ENCODE measurements at regions of chr18 and their contacts with region 1.

Region 1: DNA sequence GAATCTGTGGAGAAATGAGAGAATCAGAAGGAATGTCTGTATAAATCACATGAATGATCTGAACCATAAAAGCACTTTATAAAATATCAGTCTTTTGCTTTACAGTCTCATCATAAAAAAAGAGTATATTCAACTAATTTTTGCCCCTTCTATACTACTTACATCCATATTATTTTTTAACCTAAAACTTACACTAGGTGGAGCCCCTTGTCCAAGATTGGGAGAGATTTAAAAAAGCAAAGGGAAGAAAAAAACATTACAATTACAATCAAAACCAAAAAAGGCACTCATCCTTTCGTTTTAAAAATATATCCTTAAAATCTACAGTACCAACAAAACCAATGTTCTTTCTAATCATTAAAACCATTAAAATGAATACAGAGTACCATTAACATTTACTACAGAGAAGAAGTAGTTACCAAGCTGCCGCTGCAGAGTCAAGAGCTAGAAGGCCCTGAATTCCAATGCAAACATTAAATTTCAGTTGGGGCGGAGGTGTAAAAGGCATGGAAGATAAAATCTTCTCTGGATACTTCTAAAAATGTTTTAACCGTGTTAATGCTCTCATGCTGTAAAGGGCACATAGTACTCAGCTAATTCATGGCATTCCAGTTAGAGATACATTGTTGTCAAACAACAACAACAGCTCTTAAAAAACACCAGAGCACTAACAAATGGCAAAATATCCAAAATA is 56.7 kb upstream of the EPB41L3 start:
- DNase-seq: peak; percentile 57
- H3K4me3 ChIP-seq: no peak overlapping the region
- H3K27ac ChIP-seq: no peak overlapping the region
- H3K4me1 ChIP-seq: no peaks in the 10 kb centered on the region
- H3K27me3 ChIP-seq: peaks cover 0 to 11% of the 10 kb centered on the region in 2 experiments
- CTCF ChIP-seq: peak; percentile 8 to 18
- POLR2A ChIP-seq: no peak

Region 2: DNA sequence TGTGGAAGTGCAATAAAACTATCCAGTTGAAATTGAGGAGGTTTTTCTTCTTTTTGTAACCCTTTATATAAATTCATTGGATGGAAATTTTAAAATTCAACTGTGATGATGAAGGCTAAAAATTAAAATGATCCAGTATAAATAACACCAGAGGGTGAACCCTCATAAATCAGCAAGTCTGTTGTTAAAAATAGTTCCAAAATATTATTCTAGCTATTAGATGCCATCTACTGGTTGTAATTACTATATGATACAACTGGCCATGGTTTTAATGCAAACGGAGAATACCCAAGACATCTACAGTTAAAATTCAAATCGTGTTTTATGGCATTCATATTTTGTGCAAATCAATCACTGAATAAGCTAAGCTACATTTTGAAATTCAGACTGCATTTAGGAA is 241.0 kb after region 1 on chr18:
- CTCF ChIA-PET with region 1: interaction called, 18 read pairs
- POLR2A ChIA-PET with region 1: no interaction called
- dilution Hi-C with region 1: no loop called
- intact Hi-C with region 1: loop called (anchors 5 kb)
- DNase-seq: peak; percentile 2
- H3K4me3 ChIP-seq: no peak overlapping the region
- H3K27ac ChIP-seq: no peak overlapping the region
- H3K4me1 ChIP-seq: no peaks in the 10 kb centered on the region
- H3K27me3 ChIP-seq: no peaks in the 10 kb centered on the region
- CTCF ChIP-seq: no peak
- POLR2A ChIP-seq: no peak

Region 3: DNA sequence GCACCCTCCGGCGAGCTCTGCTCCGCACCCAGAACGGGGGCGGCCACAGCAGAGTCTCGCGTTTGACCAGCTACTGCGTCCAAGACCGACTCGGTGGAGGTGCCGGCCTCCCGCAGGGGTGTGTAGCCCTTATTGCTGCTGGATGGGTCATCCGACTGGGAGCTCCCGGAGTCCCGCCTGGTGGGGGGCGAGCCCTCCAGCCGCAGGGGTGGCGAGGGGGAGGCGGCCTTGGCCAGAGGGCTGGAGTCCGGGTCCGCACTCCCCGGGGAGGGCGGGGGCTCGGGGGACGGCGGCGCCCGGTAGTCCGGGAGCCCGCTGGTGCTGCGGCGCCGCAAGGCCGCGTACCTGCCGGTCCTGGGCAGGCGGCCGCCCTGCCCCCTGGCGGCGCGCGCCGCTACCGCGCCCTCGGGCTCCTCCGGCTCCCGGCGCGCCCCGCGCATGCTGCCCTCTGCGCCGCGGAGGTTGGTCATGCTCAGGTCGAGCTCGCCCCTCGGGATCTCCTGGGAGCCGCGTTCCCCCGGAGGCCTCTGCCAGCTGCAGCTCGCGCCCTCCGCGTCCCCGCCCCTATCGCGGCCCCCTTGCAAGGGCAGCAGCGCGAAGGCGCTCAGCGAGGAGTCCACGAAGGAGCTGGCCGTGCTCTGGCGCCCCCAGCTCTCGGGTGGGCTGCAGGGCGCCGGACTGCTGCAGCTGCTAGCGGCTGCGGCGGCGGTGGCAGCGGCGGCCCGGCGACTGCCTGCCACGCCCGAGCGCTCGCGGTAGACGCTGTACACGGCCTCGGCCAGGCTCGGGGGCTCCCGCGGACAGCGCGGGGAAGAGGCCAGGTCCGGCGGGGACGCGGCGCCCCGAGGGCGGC is 290.0 kb after region 1 on chr18:
- CTCF ChIA-PET with region 1: interaction called, 24 read pairs
- POLR2A ChIA-PET with region 1: no interaction called
- dilution Hi-C with region 1: no loop called
- intact Hi-C with region 1: loop called (anchors 1 kb)
- DNase-seq: peak; percentile 15
- H3K4me3 ChIP-seq: peak overlapping the region in 2 of 3 experiments; percentile 32 to 34
- H3K27ac ChIP-seq: no peak overlapping the region
- H3K4me1 ChIP-seq: peaks cover 3% of the 10 kb centered on the region
- H3K27me3 ChIP-seq: peaks cover 37 to 54% of the 10 kb centered on the region in 2 experiments
- CTCF ChIP-seq: peak; percentile 33 to 58
- POLR2A ChIP-seq: no peak

Region 4: DNA sequence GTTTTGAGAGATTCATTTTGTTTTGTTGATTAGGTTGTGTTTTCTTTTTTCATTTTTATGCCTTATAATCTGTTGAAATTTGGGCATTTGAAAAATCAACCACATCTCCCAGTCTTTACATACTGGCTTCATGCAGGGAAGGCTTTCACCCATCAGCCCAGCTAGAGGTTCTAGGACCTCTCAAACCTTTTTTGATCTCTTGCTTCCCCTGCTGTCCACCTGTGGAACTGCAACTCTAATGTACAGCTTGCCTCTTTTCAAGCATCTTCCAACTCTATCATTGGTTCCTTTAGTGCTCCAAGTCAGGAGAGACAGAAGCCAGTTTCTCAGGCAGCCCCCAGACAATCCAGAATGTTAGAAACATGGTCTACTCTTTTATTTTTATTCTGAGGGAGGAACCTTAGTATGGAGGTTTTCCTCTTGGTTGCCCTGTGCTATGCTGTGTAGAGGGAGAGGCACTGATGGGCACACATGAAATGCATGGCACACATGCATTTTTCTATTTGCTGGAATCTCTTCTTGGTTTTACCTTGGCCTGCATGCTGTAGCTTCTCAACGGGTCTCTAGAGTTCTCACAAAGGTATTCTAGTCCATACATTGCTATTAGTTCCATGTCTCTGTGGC is 921.4 kb after region 1 on chr18:
- CTCF ChIA-PET with region 1: interaction called, 12 read pairs
- POLR2A ChIA-PET with region 1: no interaction called
- dilution Hi-C with region 1: no loop called
- intact Hi-C with region 1: loop called (anchors 2 kb)
- DNase-seq: peak; percentile 52
- H3K4me3 ChIP-seq: no peak overlapping the region
- H3K27ac ChIP-seq: no peak overlapping the region
- H3K4me1 ChIP-seq: no peaks in the 10 kb centered on the region
- H3K27me3 ChIP-seq: no peaks in the 10 kb centered on the region
- CTCF ChIP-seq: peak; percentile 68 to 79
- POLR2A ChIP-seq: no peak